ENCODE measurements at regions of chr7 and their contacts with region 1.

Region 1: DNA sequence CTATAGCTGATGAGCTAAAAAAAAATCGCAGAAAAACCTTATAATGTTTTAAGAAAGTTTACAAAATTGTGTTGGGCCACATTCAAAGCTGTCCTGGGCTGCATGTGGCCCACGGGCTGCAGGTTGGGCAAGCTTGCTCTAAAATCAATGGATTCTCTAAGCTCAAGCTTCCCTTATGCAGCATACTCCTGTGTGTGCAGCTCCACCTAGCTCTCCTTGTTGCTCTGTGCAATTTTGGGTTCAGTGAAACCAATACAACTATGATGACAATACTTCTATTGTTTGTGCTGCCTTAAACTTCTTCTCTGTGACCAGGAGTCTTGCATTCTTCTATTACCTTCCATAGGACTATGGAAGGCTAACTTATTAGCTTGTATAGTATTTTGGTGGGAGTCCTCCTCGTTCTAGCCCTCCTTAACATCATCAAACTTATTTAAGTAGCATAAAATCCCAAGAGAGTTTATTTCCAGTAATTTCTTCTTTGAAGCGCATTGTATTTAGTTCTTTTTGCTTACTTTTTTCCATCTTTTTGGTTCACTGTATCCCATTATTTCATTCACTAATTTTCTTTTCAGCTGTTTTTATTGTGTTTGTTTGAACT is 170.9 kb upstream of the SMIM30 start:
- DNase-seq: no peak
- ATAC-seq: peak; percentile 73

Region 2: DNA sequence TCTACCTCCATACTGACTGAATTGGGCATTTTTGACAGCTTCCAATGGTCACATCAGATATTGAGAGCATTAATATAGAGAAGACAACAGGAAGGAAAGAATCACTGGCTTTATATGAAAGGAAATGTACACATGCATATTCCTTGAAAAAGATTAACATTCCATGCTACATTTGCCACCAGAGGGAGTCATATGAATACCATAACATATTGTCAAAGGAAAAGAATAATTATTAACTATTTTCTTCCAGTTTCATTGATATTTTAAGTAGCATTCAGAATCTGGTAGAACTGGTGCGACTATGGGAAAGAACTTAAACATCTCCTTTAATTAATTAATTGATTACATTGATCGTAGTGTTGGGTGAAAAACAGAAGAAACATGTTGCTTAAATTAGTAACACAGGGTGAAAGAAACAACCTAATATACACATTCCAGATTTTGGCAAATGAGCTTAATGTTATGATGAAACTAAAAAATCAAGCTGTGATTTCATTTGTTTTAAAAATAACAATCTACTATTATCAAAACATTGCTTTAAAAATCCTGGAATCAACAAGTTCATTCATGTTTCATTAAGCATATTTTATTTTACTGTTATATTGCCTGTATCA is 274.1 kb before region 1 on chr7:
- intact Hi-C with region 1: loop called (anchors 10 kb)
- DNase-seq: no peak
- ATAC-seq: no peak

Region 3: GRCh38 chr7:113159746-113160339 is 129.4 kb before region 1 on chr7:
- intact Hi-C with region 1: loop called (anchors 10 kb)
- DNase-seq: no peak
- ATAC-seq: peak; percentile 59